Right cardiac atrium (tissue), 5 donors: ENCODE measurements at regions of chr11 and their contacts with region 1.

Region 1: DNA sequence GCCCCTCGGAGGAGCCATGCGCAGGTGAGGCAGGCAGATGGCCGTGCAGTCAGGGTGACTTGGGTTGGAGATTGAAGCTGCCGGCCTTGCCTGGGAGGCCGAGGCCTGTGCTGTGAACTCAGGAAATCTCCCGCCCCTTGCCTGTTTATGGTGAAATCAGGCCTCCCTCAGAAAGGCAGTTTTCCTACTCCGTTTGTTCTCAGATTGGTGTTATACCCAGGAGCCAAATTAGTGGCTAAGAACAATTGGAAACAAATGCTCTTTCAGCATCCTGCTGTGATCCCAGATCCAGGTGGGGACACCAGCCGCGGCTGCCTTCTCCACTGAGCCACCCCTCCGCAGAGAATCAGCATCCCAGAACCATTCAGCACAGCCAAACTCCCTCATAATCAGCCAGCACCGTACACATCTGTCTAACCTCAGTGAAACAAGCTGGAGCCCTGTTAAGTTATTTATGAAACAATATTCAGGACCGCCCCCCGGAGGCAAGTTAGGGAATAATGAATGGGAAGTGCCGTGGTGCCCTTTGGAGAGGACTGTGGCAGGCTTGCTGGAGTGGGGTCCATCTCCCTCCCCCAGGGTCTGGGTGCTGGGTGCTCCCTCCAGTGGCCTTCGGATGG is 60.0 kb downstream of the PKNOX2 start:
- DNase-seq: peak; percentile 47 to 83 (median 75)
- ATAC-seq: peak; percentile 69 to 78
- H3K4me3 ChIP-seq: no peak overlapping the region
- H3K27ac ChIP-seq: no peak overlapping the region
- H3K4me1 ChIP-seq: no peaks in the 10 kb centered on the region
- H3K27me3 ChIP-seq: no peaks in the 10 kb centered on the region

Region 2: DNA sequence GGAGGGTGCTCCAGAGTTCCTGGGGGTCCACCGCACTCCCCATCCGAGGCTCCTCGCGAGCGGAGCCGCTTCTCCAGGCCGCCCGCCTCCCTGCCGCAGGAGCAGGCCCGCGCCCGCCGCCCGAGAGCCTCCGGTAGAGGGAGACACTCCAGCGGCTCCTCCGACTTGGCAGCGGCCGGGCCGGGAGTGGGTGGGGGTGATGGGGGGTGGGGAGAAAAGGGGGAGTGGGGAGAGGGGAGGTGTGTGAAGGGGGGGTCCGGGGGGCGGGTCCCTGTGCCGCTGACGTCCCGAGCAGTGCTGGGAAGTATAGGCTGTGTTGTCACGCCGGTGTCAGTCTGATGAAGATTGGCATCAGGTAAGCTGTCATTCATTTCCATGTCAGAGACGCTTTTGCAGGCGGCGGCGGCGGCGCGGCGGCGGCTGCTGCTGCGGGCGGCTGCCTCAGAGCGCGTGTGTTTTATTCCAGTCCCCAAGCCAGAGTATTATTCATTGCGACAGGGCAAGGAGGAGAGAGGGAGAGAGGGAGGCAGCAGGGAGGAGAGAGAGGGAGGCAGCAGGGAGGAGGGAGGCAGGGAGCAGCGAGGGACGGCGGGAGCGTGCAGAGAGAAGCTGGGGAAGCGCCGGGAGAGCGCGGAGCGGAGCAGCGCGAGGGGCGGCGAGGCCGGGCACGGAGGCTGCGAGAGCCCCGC is 59.9 kb before region 1 on chr11 and contains the start of gene PKNOX2:
- intact Hi-C with region 1: loop called in 2 of 4 experiments (anchors 5 to 10 kb)
- DNase-seq: peak; percentile 84 to 94 (median 94)
- ATAC-seq: peak; percentile 79 to 84
- H3K4me3 ChIP-seq: peak within 1 kb of the TSS; percentile 72
- H3K27ac ChIP-seq: peak within 1 kb of the TSS; percentile 86
- H3K4me1 ChIP-seq: peaks cover 3% of the 10 kb centered on the region
- H3K27me3 ChIP-seq: no peaks in the 10 kb centered on the region
- total RNA-seq, gene PKNOX2: 12.5 to 20.2 (median 18.8) TPM